ENCODE measurements at regions of chr11 and their contacts with region 1.

Region 1: GRCh38 chr11:5808500-5809121 is at the start of gene OR52N2:
- DNase-seq: peak; percentile 82
- H3K4me3 ChIP-seq: peak within 1 kb of the TSS; percentile 27 to 71 (median 48)
- H3K27ac ChIP-seq: peak within 1 kb of the TSS in 1 of 8 donors; percentile 40
- H3K4me1 ChIP-seq: peaks cover 0 to 15% (median 13%) of the 10 kb centered on the region in 6 donors
- H3K27me3 ChIP-seq: peaks cover 0 to 15% (median 0%) of the 10 kb centered on the region in 7 donors
- CTCF ChIP-seq: peak; percentile 78 to 93 (median 87)
- POLR2A ChIP-seq: no peak
- total RNA-seq, gene OR52N2: not detected

Region 2: GRCh38 chr11:4962816-4963215 is 845.8 kb before region 1 on chr11:
- intact Hi-C with region 1: no loop called
- DNase-seq: no peak
- H3K4me3 ChIP-seq: no peak overlapping the region
- H3K27ac ChIP-seq: no peak overlapping the region
- H3K4me1 ChIP-seq: no peaks in the 10 kb centered on the region
- H3K27me3 ChIP-seq: no peaks in the 10 kb centered on the region
- CTCF ChIP-seq: no peak
- POLR2A ChIP-seq: no peak

Region 3: GRCh38 chr11:5123802-5124521 is 684.6 kb before region 1 on chr11:
- intact Hi-C with region 1: loop called (anchors 5 kb)
- DNase-seq: no peak
- H3K4me3 ChIP-seq: no peak overlapping the region
- H3K27ac ChIP-seq: no peak overlapping the region
- H3K4me1 ChIP-seq: peaks cover 0 to 4% (median 0%) of the 10 kb centered on the region in 6 donors
- H3K27me3 ChIP-seq: peaks cover 0 to 13% (median 0%) of the 10 kb centered on the region in 7 donors
- CTCF ChIP-seq: peak; percentile 16 to 85 (median 73)
- POLR2A ChIP-seq: no peak

Region 4: DNA sequence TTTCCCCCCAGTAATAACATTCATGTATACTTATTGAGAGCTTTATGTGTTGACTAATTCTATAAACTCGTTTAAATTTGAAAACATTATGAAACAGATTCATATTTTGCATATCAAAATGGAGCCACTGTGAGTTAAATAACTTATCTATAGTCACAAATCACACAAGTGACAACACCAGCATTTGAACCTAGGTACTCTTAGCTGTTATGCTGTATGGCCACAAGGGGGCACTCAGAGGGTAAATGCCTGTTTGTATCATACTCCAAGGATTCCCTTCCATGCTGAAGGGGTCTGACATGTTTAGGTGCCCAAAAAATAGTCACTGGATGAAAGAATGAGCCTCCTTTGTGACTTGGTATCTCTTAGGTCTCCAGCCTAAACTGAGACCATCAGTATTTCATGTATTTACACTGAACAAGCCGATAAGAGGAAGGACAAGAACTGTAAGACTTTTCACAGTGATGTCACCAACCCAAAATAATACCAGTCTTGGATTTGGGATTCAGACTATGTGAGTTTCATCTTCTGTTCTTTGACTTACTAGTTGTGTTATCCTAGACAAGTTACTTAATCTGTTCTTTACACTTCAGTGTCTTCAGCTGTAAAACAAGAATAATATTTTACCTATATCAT is 332.3 kb before region 1 on chr11:
- intact Hi-C with region 1: loop called (anchors 2 kb)
- DNase-seq: no peak
- H3K4me3 ChIP-seq: no peak overlapping the region
- H3K27ac ChIP-seq: no peak overlapping the region
- H3K4me1 ChIP-seq: no peaks in the 10 kb centered on the region
- H3K27me3 ChIP-seq: peaks cover 0 to 3% (median 0%) of the 10 kb centered on the region in 7 donors
- CTCF ChIP-seq: peak in 10 of 11 experiments; percentile 28 to 82 (median 70)
- POLR2A ChIP-seq: no peak

Region 5: GRCh38 chr11:5596607-5597201 is 211.9 kb before region 1 on chr11 and contains the start of gene TRIM6:
- intact Hi-C with region 1: loop called (anchors 5 kb)
- DNase-seq: peak; percentile 84
- H3K4me3 ChIP-seq: peak within 1 kb of the TSS in 6 of 8 donors; percentile 11 to 66 (median 34)
- H3K27ac ChIP-seq: peak within 1 kb of the TSS in 2 of 8 donors; percentile 39 to 49
- H3K4me1 ChIP-seq: peaks cover 0 to 26% (median 8%) of the 10 kb centered on the region in 6 donors
- H3K27me3 ChIP-seq: peaks cover 0 to 7% (median 0%) of the 10 kb centered on the region in 7 donors
- CTCF ChIP-seq: no peak
- POLR2A ChIP-seq: no peak
- total RNA-seq, gene TRIM6: 1.4 to 6.1 (median 4.3) TPM

Region 6: DNA sequence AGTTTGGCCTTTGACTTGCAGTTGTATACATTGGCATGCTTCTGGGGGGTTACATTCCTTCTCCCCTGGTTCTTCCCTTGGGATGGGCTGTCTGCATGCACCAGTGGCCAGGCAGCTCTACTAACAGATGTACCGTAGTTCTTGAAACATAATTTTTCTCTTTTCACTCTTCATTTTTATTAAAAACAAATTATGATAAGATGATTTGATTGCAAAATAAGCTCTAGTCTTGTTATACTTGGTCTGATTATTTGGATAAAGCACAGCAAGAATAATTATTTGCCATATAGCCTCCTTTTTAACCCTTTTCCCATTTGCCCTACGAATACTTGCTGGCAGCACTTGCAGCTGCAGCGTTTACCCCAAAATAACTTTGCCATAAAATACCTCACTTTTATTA is 147.0 kb after region 1 on chr11:
- intact Hi-C with region 1: no loop called
- DNase-seq: no peak
- H3K4me3 ChIP-seq: no peak overlapping the region
- H3K27ac ChIP-seq: no peak overlapping the region
- H3K4me1 ChIP-seq: no peaks in the 10 kb centered on the region
- H3K27me3 ChIP-seq: no peaks in the 10 kb centered on the region
- CTCF ChIP-seq: no peak
- POLR2A ChIP-seq: no peak

Region 7: DNA sequence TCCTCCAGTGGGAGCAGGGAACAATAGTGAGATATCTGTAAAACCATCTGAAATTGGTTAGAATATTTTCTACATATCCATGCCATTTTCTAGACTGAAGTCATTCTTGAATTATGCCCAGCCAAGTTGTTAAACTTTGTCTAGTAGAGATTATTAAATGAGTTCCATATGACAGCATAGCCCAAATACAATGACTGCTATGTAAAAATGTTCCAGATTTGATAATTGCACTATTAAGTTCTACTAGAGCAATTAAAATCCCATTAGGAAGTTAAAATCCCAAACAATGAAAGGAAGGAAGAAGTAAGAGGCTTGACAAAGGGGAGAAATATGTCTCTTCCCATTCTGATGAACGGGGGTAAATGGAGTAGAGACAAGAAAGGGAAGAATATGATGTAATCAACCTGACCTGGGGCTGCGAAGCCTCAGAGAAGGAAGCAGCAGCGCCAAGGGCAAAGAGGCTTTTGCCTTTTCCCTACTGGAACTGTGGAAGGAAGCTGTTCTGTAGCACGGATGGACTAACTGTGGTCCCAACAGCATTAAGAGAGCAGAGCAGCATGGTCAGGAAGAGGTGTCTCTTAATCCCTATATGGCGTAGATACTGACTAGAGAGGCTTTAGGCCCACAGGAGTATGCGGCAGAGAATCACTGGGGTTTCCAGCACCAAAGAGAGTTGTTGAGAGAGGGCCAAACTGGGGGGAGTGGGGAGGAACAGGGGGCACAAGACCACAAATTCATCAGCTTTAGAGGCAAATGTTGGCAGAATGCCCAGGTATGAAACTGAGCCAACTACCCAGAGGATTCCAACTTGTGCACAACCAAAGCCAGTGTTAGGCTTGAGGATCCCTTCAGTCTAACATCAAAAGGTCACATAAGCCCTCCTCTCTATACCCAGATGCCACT is 768.1 kb after region 1 on chr11:
- intact Hi-C with region 1: no loop called
- DNase-seq: no peak
- H3K4me3 ChIP-seq: no peak overlapping the region
- H3K27ac ChIP-seq: peak overlapping the region in 6 of 8 donors; percentile 21 to 74 (median 52)
- H3K4me1 ChIP-seq: peaks cover 10 to 22% (median 13%) of the 10 kb centered on the region in 6 donors
- H3K27me3 ChIP-seq: no peaks in the 10 kb centered on the region
- CTCF ChIP-seq: no peak
- POLR2A ChIP-seq: no peak

Measured in spleen (tissue), 13 donors.